Activated B cell treated with CpG ODN at 0.5 μM for 24 hours (primary cell): ENCODE measurements at regions of chr20 and their contacts with region 1.

Region 1: GRCh38 chr20:18913701-18914100 is 100.1 kb downstream of the SCP2D1 start:
- DNase-seq: no peak
- ATAC-seq: no peak
- H3K4me3 Mint-ChIP-seq: no peak overlapping the region
- H3K27ac Mint-ChIP-seq: no peak overlapping the region
- H3K4me1 Mint-ChIP-seq: no peaks in the 10 kb centered on the region
- H3K27me3 Mint-ChIP-seq: no peaks in the 10 kb centered on the region
- CTCF ChIP-seq: no peak

Region 2: GRCh38 chr20:18984238-18985200 is 70.8 kb after region 1 on chr20:
- CTCF ChIA-PET with region 1: no interaction called
- POLR2A ChIA-PET with region 1: no interaction called
- intact Hi-C with region 1: loop called (anchors 5 kb)
- DNase-seq: no peak
- ATAC-seq: no peak
- H3K4me3 Mint-ChIP-seq: no peak overlapping the region
- H3K27ac Mint-ChIP-seq: no peak overlapping the region
- H3K4me1 Mint-ChIP-seq: no peaks in the 10 kb centered on the region
- H3K27me3 Mint-ChIP-seq: no peaks in the 10 kb centered on the region
- CTCF ChIP-seq: no peak